Activated B cell treated with CpG ODN at 0.5 μM for 24 hours (primary cell): ENCODE measurements at regions of chr5 and their contacts with region 1.

Region 1: GRCh38 chr5:141618804-141619554 is at the start of gene DIAPH1:
- DNase-seq: peak; percentile 95
- ATAC-seq: peak; percentile 89
- H3K4me3 Mint-ChIP-seq: peak within 1 kb of the TSS; percentile 93
- H3K27ac Mint-ChIP-seq: peak within 1 kb of the TSS; percentile 92
- H3K4me1 Mint-ChIP-seq: peaks cover 66% of the 10 kb centered on the region
- H3K27me3 Mint-ChIP-seq: no peaks in the 10 kb centered on the region
- CTCF ChIP-seq: peak; percentile 69
- total RNA-seq, gene DIAPH1: 136 and 138 TPM in 2 replicates

Region 2: GRCh38 chr5:140284013-140284412 is 1335.0 kb before region 1 on chr5:
- CTCF ChIA-PET with region 1: no interaction called
- POLR2A ChIA-PET with region 1: no interaction called
- intact Hi-C with region 1: no loop called
- DNase-seq: no peak
- ATAC-seq: no peak
- H3K4me3 Mint-ChIP-seq: peak overlapping the region; percentile 79
- H3K27ac Mint-ChIP-seq: peak overlapping the region; percentile 85
- H3K4me1 Mint-ChIP-seq: peaks cover 27% of the 10 kb centered on the region
- H3K27me3 Mint-ChIP-seq: no peaks in the 10 kb centered on the region
- CTCF ChIP-seq: no peak

Region 3: GRCh38 chr5:141590127-141590526 is 28.9 kb before region 1 on chr5:
- CTCF ChIA-PET with region 1: interaction called, 315 read pairs
- POLR2A ChIA-PET with region 1: interaction called, 99 read pairs
- intact Hi-C with region 1: loop called (anchors 1 kb)
- DNase-seq: no peak
- ATAC-seq: no peak
- H3K4me3 Mint-ChIP-seq: no peak overlapping the region
- H3K27ac Mint-ChIP-seq: no peak overlapping the region
- H3K4me1 Mint-ChIP-seq: peaks cover 21% of the 10 kb centered on the region
- H3K27me3 Mint-ChIP-seq: no peaks in the 10 kb centered on the region
- CTCF ChIP-seq: no peak

Region 4: GRCh38 chr5:141605523-141606277 is 13.3 kb before region 1 on chr5:
- CTCF ChIA-PET with region 1: interaction called, 32 read pairs
- POLR2A ChIA-PET with region 1: interaction called, 63 read pairs
- intact Hi-C with region 1: loop called (anchors 1 kb)
- DNase-seq: no peak
- ATAC-seq: peak; percentile 97
- H3K4me3 Mint-ChIP-seq: peak overlapping the region; percentile 76
- H3K27ac Mint-ChIP-seq: peak overlapping the region; percentile 93
- H3K4me1 Mint-ChIP-seq: peaks cover 84% of the 10 kb centered on the region
- H3K27me3 Mint-ChIP-seq: no peaks in the 10 kb centered on the region
- CTCF ChIP-seq: no peak

Region 5: DNA sequence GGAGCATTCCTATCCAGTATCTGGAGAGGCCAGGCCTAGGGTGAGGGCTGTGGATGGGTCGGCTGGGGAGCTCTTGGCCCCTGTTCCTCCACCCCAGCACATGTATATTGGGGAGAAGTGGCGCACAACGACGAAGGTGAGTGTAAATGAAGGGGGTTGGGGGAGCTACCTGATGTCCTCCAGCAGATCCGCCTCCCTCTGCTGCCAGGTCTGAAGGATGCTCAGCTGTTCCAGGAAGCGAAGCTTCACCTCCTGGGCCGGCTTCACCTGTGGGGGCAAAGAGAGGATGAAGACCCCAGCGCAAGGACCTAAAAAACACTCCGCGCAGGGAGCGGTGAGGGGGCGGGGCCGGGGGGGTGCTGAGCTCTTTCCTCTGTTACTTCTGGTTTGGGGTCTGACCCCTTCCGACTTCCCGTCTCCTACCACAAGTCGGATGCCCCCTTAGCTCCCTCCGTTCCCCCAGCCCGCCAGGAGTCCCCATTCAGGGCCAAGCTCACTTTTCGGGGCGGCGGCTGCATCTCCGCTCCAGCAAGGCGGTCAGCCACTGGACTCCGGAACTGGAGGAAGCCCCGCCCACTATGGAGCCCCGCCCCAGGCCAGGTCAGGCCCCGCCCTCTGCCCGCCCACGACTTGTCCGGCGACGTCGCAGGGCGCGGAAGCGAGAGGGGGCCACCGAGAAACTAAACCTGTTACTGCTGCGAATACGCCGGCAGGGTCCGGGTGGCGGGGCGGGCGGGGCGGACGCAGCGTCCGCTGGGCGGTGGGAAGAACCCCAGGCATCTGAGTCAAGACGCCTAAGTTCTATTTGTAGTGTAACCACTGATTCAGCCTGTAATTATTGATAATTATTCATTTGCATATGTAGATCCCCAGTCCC is 32.1 kb after region 1 on chr5 and contains the start of gene FCHSD1:
- CTCF ChIA-PET with region 1: interaction called, 3 read pairs
- POLR2A ChIA-PET with region 1: interaction called, 8 read pairs
- intact Hi-C with region 1: loop called (anchors 1 kb)
- DNase-seq: peak; percentile 83
- ATAC-seq: peak; percentile 99
- H3K4me3 Mint-ChIP-seq: peak within 1 kb of the TSS; percentile 98
- H3K27ac Mint-ChIP-seq: peak within 1 kb of the TSS; percentile 96
- H3K4me1 Mint-ChIP-seq: peaks cover 29% of the 10 kb centered on the region
- H3K27me3 Mint-ChIP-seq: peaks cover 3% of the 10 kb centered on the region
- CTCF ChIP-seq: no peak
- total RNA-seq, gene FCHSD1: 63.2 and 79.5 TPM in 2 replicates

Region 6: GRCh38 chr5:141811287-141812155 is 192.5 kb after region 1 on chr5:
- CTCF ChIA-PET with region 1: no interaction called
- POLR2A ChIA-PET with region 1: no interaction called
- intact Hi-C with region 1: no loop called
- DNase-seq: no peak
- ATAC-seq: peak; percentile 45
- H3K4me3 Mint-ChIP-seq: no peak overlapping the region
- H3K27ac Mint-ChIP-seq: no peak overlapping the region
- H3K4me1 Mint-ChIP-seq: no peaks in the 10 kb centered on the region
- H3K27me3 Mint-ChIP-seq: peaks cover 57% of the 10 kb centered on the region
- CTCF ChIP-seq: no peak

Region 7: DNA sequence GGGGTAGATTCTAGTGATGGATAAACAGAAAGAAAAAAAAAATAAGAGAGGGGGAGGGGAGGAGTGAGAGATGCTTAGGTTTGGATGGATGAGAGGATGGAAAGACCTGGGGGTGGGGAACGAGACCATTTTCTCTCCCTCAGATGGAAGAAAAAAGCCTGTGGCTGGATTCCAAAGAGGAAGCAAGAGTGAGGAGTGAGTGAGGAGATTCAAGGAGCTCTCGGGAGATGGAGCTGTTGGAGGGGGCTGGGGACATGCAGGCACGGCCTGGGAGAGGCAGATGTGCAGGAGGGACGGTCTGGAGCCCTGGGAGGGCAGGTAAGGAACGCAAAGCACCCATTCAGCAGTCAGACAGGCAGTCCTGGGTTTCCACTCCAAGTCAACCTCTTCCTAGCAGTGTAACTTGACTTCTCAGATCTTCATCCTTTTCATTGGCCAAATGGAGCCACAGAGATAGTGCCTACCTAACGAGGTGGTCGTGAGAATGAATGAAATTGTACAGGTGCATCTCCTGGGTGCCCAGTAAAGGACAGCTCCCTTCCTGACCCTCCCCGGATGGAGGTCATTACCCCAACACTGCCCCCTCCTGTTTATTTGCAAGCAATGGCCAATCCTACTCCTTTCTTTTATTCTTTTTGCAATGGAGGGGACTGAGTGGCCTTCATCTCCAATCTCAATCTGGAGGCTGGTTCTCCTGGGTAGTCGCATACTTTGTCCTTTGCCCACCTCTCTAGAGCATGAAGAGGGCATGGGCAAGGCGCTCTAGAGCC is 207.0 kb after region 1 on chr5:
- CTCF ChIA-PET with region 1: no interaction called
- POLR2A ChIA-PET with region 1: no interaction called
- intact Hi-C with region 1: no loop called
- DNase-seq: no peak
- ATAC-seq: no peak
- H3K4me3 Mint-ChIP-seq: no peak overlapping the region
- H3K27ac Mint-ChIP-seq: no peak overlapping the region
- H3K4me1 Mint-ChIP-seq: no peaks in the 10 kb centered on the region
- H3K27me3 Mint-ChIP-seq: peaks cover 10% of the 10 kb centered on the region
- CTCF ChIP-seq: no peak